BJ (cell line): ENCODE measurements at regions of chr3 and their contacts with region 1.

Region 1: GRCh38 chr3:11556851-11557644 is 86.7 kb downstream of the VGLL4 start:
- DNase-seq: no peak
- H3K4me3 ChIP-seq: no peak overlapping the region
- H3K27me3 ChIP-seq: no peaks in the 10 kb centered on the region
- CTCF ChIP-seq: no peak

Region 2: DNA sequence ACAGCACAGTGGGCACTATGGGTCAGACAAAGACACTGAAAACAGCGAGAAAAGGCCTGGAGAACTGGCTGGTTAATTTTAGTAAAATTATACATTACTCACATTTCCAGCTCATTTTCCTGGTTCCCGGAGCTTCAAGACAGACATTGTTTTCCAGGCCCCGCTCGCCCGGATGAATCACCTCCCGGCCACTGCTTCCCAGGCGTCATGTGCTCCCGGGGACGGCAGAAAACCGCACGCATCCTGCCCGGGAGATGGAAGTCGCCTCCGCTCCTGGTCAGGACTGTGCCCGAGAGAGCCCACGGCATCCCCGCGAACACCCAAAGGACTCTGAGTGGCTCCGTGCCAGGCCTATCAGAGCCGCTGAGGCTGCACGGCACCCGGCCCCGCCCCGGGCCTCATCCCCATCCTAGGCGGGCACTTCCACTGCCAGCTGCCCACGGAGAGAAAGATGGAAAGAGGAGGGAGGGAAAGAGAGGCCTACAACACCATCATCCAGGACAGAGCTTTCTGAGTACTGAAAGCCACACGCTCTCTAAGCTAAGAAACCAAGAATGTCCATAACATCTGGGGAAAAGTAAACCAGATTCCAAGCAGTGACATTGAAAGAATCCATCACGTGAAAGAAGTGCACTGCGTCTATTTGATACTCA is 11.6 kb after region 1 on chr3:
- CTCF ChIA-PET with region 1: interaction called, 3 read pairs
- POLR2A ChIA-PET with region 1: interaction called, 12 read pairs
- DNase-seq: peak; percentile 75
- H3K4me3 ChIP-seq: peak overlapping the region; percentile 30
- H3K27me3 ChIP-seq: no peaks in the 10 kb centered on the region
- CTCF ChIP-seq: no peak